Left cardiac atrium (tissue), 4 donors: ENCODE measurements at regions of chr3 and their contacts with region 1.

Region 1: DNA sequence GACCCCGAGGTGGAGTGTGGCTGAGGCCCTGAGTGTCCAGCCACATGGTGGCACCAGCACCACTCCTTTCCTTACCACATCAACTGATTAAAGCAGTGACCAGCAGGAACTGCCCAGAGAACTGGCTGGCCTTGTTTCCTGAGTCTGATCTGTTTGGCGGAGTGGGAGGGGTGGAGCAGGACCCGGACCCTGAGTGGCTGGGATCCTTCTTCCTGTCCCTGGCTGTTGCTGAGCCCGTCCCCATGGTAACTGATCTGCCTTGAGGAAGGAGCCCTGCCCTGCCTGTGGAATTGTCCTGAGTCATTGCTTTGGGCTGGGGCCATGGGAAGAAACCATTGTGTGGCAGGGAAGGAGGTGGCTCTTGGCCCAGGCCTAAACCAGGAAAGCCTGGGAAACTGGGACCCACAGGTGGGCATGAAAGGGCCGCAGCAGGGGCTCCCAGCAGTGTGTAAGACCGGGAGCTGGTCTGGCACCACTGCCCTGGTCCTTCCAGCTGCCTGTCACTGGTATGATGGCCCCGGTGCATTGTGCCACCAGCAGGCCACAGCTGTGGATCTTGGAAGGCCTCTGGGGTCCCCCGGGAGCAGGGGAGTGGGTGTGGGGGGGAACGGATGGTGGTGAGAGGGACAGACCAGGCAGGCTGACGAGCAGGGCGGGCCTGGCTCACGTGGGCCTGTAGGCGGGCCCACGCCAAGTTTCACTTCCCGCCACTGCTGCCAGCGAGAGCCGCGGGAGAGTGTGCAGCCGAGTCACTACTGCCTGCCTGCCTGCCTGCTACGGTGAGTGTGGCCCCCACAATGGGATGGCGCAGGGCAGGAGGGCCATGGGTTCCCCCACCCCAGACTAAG is 19.2 kb downstream of the ATRIP start:
- DNase-seq: peak; percentile 98
- ATAC-seq: peak; percentile 93 to 95

Region 2: DNA sequence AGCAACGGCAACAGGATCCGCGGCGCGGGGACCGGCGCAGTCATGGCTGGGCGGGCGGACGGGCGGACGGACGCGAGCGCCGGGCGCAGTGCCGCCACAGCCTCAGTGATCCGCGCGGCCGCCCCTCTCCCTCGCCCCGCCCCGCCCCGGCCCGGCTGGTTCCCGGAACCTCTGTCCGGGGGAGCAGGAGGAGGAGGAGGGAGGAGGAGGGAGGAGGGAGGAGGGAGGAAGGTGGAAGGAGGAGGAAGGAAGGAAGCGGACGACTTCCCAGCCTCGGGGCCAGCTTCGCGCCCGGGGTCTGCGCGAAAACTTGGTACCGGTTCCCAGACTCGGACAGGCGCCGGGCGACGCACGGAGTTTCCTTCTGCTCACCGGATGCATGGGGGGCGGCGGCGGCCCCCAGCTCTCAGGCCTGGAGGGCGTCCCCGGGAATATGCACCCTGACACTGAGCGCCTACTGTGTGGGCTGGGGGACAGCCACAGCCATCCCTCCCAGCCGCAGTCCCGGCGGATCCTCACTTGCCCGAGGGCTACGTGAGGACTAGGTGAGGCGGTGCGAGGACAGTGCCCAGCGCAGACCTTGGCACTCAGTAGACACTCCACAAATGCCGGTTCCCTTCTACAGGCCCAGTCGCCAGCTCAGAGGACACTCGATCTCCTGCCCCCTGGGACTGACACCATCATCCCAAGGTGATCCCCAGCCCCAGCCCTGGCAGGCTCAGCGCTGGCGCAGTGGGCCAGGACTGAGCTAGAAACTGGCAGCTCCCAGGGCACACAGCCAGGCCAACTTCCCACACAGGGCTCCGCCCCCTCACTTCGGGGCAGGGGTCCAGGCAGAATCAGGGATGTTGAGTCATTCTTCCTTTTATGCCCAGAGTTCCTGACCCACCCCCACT is 38.5 kb after region 1 on chr3 and contains the start of gene SHISA5:
- intact Hi-C with region 1: loop called in 1 of 2 experiments (anchors 5 kb)
- DNase-seq: peak; percentile 92
- ATAC-seq: peak; percentile 89 to 92
- total RNA-seq, gene SHISA5: 73.3 to 108 TPM

Region 3: GRCh38 chr3:48548729-48549705 is 83.3 kb after region 1 on chr3:
- intact Hi-C with region 1: loop called (anchors 2 to 5 kb)
- DNase-seq: peak; percentile 90
- ATAC-seq: peak; percentile 93 to 95